ENCODE measurements at regions of chr3 and their contacts with region 1.

Region 1: DNA sequence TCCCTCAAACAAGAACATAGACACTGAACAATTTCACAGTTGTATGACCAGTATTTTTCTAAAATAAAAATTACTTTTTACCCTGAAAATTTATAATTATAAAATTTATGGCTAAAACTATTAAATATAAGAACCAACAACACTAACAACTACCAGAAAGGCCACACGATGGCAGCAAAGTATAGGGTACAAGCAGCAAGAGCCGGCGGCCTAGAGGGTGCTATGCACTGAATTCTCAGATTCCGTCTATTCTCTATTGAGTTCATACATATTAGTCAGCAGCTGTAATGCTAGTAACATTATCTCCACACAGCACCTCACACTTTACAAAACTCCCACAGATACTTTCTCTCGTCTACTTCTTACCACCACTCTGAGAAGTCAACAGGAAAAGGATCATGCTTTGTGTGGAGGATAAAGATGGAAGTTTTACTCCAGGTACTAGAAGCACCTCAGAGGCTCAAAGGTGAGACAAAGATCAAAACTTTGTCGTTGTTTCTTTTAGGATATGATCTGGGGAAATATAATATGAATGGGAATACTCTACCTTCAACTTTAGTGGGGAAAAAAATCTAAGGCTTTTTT is 160.5 kb downstream of the FGF12 start:
- DNase-seq: peak in 8 of 9 donors; percentile 10 to 54 (median 36)
- ATAC-seq: peak; percentile 55
- H3K4me3 ChIP-seq: no peak overlapping the region
- H3K4me3 Mint-ChIP-seq: no peak overlapping the region
- H3K27ac ChIP-seq: no peak overlapping the region
- H3K27ac Mint-ChIP-seq: no peak overlapping the region
- H3K4me1 ChIP-seq: no peaks in the 10 kb centered on the region
- H3K4me1 Mint-ChIP-seq: peaks cover 0 to 10% (median 9%) of the 10 kb centered on the region in 7 donors
- H3K27me3 ChIP-seq: no peaks in the 10 kb centered on the region
- H3K27me3 Mint-ChIP-seq: peaks cover 17 to 31% (median 23%) of the 10 kb centered on the region in 5 donors

Region 2: DNA sequence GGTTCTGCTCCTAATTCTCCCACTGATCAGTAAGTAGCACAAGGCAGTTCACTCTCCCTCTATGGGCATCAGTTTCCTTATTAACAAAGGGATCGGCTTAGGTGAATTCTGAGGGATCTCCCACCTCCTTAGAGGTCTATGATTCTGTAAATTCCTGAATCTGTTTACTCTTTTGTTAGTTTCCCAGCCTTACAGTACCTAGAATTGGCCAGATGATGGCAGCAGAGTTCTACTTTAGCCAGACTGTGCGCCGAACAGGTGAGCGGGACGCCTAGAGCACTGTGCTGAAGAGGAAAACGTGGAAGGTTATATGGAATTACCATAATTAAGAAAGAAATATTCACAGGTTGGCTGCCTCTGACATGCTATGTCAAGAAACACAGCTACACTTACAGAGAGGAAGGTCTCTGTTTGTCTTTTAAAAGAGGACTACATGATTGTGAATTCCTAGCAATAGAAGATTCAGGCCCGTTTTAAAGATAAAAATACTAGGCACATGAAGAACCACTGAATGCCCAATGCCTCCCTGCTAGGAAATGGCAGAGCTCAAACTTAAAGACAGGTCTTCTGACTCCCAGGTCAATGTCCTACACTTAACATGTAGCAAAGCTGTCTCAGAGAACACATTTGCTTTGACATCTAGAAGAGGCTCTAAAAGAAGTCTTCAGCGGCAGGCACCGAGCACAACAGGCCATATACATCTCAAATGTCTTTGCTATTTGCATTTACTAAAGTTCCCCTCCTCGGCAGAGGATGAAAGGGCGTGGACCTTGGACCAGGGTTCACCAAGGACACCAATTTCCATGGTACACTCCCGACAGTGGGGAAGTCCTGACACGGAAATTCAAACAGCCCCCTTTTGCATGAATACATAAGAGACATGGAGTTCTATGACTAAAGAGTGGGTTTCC is 99.3 kb before region 1 on chr3:
- CTCF ChIA-PET with region 1: no interaction called
- POLR2A ChIA-PET with region 1: no interaction called
- intact Hi-C with region 1: loop called in 1 of 2 experiments (anchors 1 kb)
- DNase-seq: peak; percentile 7 to 45 (median 31)
- ATAC-seq: peak; percentile 83
- H3K4me3 ChIP-seq: no peak overlapping the region
- H3K4me3 Mint-ChIP-seq: peak overlapping the region in 1 of 10 donors; percentile 18
- H3K27ac ChIP-seq: no peak overlapping the region
- H3K27ac Mint-ChIP-seq: no peak overlapping the region
- H3K4me1 ChIP-seq: no peaks in the 10 kb centered on the region
- H3K4me1 Mint-ChIP-seq: peaks cover 0 to 4% (median 0%) of the 10 kb centered on the region in 7 donors
- H3K27me3 ChIP-seq: no peaks in the 10 kb centered on the region
- H3K27me3 Mint-ChIP-seq: peaks cover 11 to 26% (median 19%) of the 10 kb centered on the region in 5 donors

Region 3: GRCh38 chr3:192545333-192545732 is 21.5 kb before region 1 on chr3:
- CTCF ChIA-PET with region 1: no interaction called
- POLR2A ChIA-PET with region 1: no interaction called
- intact Hi-C with region 1: no loop called
- DNase-seq: no peak
- ATAC-seq: no peak
- H3K4me3 ChIP-seq: no peak overlapping the region
- H3K4me3 Mint-ChIP-seq: no peak overlapping the region
- H3K27ac ChIP-seq: no peak overlapping the region
- H3K27ac Mint-ChIP-seq: no peak overlapping the region
- H3K4me1 ChIP-seq: no peaks in the 10 kb centered on the region
- H3K4me1 Mint-ChIP-seq: no peaks in the 10 kb centered on the region
- H3K27me3 ChIP-seq: no peaks in the 10 kb centered on the region
- H3K27me3 Mint-ChIP-seq: peaks cover 0 to 29% (median 16%) of the 10 kb centered on the region in 5 donors

Region 4: GRCh38 chr3:192802957-192803899 is 236.4 kb after region 1 on chr3:
- CTCF ChIA-PET with region 1: no interaction called
- POLR2A ChIA-PET with region 1: no interaction called
- intact Hi-C with region 1: loop called in 1 of 2 experiments (anchors 1 kb)
- DNase-seq: peak in 1 of 9 donors; percentile 7
- ATAC-seq: no peak
- H3K4me3 ChIP-seq: no peak overlapping the region
- H3K4me3 Mint-ChIP-seq: no peak overlapping the region
- H3K27ac ChIP-seq: no peak overlapping the region
- H3K27ac Mint-ChIP-seq: no peak overlapping the region
- H3K4me1 ChIP-seq: no peaks in the 10 kb centered on the region
- H3K4me1 Mint-ChIP-seq: peaks cover 0 to 13% (median 0%) of the 10 kb centered on the region in 7 donors
- H3K27me3 ChIP-seq: no peaks in the 10 kb centered on the region
- H3K27me3 Mint-ChIP-seq: no peaks in the 10 kb centered on the region

Region 5: DNA sequence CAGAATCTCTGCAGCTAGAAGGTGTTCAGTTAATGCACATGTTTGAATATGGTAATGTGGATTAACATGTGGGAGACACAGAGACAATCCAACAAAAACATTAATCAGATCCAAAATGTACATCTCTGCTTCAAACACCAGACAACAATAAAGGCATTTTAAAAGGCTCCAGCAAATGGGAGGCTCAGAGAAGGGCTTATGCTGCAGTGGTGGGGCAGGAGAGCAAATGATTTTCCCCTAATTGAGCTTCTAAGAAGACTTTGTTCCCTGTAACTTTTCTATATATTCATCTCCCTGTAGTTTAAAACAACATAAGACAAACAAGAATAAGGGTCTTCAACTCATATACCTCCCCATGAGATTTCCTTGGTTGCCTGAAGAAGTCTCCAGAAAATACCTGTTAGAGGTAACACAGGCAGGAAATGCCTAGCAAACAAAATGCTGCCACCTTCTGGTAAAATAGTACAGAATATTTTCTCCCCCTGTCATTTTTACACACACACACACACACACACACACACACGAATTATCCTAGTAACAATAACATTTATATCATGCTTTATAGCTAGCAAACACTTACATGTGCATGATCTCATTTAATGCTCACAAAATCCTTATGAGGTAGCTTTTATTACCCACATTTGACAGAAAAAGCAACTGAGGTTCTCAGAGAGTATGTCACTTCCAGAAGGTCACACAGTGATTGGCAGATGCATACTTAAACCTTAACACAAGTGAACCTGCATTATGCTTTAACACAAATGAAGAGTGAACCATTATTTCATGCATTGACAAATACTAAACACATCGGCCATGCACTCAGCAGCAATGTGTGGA is 474.3 kb after region 1 on chr3:
- CTCF ChIA-PET with region 1: no interaction called
- POLR2A ChIA-PET with region 1: no interaction called
- intact Hi-C with region 1: loop called in 1 of 2 experiments (anchors 1 kb)
- DNase-seq: peak in 7 of 9 donors; percentile 13 to 50 (median 30)
- ATAC-seq: peak; percentile 26
- H3K4me3 ChIP-seq: no peak overlapping the region
- H3K4me3 Mint-ChIP-seq: no peak overlapping the region
- H3K27ac ChIP-seq: no peak overlapping the region
- H3K27ac Mint-ChIP-seq: no peak overlapping the region
- H3K4me1 ChIP-seq: no peaks in the 10 kb centered on the region
- H3K4me1 Mint-ChIP-seq: peaks cover 0 to 9% (median 0%) of the 10 kb centered on the region in 7 donors
- H3K27me3 ChIP-seq: no peaks in the 10 kb centered on the region
- H3K27me3 Mint-ChIP-seq: peaks cover 0 to 9% (median 0%) of the 10 kb centered on the region in 5 donors

Region 6: GRCh38 chr3:193465992-193466608 is 899.3 kb after region 1 on chr3:
- CTCF ChIA-PET with region 1: no interaction called
- POLR2A ChIA-PET with region 1: no interaction called
- intact Hi-C with region 1: loop called in 1 of 2 experiments (anchors 2 kb)
- DNase-seq: no peak
- ATAC-seq: no peak
- H3K4me3 ChIP-seq: no peak overlapping the region
- H3K4me3 Mint-ChIP-seq: no peak overlapping the region
- H3K27ac ChIP-seq: no peak overlapping the region
- H3K27ac Mint-ChIP-seq: no peak overlapping the region
- H3K4me1 ChIP-seq: no peaks in the 10 kb centered on the region
- H3K4me1 Mint-ChIP-seq: peaks cover 0 to 6% (median 0%) of the 10 kb centered on the region in 7 donors
- H3K27me3 ChIP-seq: no peaks in the 10 kb centered on the region
- H3K27me3 Mint-ChIP-seq: no peaks in the 10 kb centered on the region

Measured in naive thymus-derived CD4-positive, alpha-beta T cell (primary cell).